ENCODE measurements at regions of chr20 and their contacts with region 1.

Region 1: DNA sequence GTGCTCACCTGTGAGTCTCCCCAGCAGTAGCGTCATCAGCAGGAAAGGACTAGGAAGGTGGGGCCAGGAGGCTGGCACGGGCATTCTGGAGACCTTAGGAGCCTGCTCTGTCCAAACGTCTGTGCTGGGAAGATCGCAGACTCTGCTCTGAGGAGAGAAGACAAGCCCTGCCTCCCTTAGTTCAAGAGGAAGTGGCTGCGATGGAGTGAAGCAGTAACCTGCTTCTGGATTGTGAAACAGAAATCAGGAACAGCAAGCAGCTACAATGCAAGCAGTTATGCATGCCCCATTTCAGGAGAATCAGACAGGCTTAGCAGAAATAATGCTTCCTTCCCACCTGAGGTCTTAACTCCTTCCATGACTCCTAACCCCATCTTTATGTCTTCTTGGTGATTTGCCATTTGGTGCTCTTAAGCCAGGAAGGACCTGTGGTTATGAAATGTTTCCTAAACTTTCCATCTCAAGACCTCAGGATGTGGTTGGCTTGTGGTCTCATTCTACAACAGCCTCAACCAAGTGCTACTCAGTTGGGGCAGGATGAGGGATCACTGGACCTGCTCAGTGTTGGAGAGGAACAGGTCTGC is at the start of gene SIRPB1:
- DNase-seq: no peak

Region 2: GRCh38 chr20:1567392-1568162 is 52.4 kb before region 1 on chr20:
- intact Hi-C with region 1: loop called (anchors 10 kb)
- DNase-seq: no peak

Region 3: GRCh38 chr20:1734269-1734858 is 114.4 kb after region 1 on chr20:
- intact Hi-C with region 1: no loop called
- DNase-seq: peak in 1 of 10 donors; percentile 20